ENCODE measurements at regions of chr5 and their contacts with region 1.

Region 1: GRCh38 chr5:167814828-167815227 is 476.6 kb upstream of the WWC1 start:
- DNase-seq: no peak

Region 2: DNA sequence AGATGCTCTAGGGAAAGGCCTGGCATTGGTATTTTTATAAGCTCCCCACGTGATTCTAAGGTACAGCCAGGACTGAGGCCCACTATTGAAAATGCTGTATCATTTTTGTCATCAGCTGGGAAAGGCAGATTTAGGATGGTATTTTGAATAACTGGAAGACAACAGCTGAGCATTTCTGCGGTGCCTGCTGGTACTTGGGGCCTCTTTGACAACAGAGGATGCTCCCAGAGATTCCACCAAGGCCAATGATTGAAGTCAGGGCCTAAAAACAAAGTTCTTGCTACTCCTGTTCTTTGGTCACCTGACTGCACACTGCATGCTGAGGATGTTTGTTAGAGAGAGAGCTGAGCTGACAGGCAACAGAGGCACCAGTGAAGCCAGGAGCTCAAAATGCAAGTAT is 722.3 kb after region 1 on chr5:
- intact Hi-C with region 1: loop called in 1 of 2 experiments (anchors 5 kb)
- DNase-seq: no peak

Measured in posterior vena cava (tissue), 2 donors.